ENCODE measurements at regions of chr6 and their contacts with region 1.

Region 1: GRCh38 chr6:123316733-123317323 is 319.9 kb downstream of the TRDN start:
- DNase-seq: no peak

Region 2: DNA sequence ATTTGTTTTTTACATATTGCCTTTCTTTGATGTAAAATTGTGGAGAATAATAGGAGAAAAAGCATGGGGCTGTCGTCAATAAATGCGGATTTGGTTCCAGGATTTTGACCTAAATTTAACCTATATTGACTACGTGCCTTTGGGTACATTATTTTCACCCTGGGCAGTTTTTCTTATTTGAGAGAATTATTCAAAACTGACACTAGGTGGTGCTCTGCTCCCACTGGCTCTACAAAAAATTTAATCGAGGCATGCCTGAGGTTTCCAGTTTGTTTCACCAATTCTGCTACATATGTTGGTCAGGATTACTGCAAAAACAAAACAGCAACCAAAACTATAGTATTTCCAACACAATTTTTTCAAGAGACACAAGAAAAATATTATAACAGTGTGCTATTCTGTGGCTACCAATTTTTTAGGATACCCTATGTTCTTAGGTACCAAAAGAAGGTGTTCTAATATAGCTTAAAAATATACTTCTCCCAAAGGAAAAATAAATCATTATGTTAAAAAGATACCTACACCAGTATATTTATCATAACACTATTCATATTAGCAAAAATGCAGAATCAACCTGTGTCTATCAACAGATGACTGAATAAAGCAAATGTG is 585.9 kb before region 1 on chr6:
- intact Hi-C with region 1: loop called (anchors 5 kb)
- DNase-seq: peak in 2 of 10 donors; percentile 23 to 34

Region 3: DNA sequence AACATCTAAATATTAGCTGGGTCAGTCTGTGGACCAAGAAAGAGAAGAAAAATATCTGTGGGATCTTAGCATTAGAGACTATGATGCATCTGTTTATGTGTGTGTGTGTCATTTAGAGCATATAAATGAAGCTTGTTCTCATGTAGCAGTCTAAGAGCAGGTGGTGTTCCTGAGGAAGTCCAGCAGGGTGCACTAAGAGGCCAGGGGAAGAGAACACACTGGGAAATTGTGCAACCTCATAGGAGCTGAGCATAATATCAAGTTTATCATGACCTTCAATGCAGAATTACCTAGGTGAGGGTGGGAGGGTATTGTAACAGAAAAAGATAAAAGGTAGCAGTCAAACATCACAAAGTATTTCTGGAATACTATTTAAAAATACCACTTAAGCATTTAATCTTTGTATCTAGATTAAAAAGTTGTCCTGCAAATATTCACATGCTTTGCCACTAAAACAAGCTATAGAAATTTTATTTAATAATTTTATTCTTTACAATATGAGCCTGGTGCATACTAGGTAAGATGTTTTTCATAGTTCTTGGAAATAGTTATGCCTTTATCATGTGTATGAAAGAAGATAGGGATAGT is 447.3 kb before region 1 on chr6:
- intact Hi-C with region 1: loop called (anchors 2 kb)
- DNase-seq: peak in 5 of 10 donors; percentile 20 to 88 (median 24)

Region 4: GRCh38 chr6:122930252-122931180 is 386.3 kb before region 1 on chr6:
- intact Hi-C with region 1: loop called (anchors 10 kb)
- DNase-seq: no peak

Region 5: DNA sequence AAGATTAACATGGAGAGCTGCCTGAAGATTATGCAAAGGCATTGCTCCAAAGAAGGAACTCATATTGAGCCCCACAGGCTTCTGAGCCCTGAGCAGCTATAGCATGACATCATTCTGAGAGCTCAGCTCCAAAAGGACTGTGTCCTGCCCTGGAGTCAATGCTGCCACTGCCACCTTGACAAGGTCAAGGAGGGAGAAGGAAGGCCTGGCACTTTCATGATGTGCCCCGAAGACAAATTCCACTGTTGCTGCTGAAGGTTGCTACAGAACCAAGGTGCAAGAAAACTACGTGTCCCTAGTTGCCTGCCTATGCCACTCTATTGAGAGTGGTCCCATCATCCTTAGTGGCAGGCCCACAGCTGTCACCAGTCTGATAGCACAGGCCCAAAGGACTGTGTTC is 74.0 kb before region 1 on chr6:
- intact Hi-C with region 1: no loop called
- DNase-seq: peak in 1 of 10 donors; percentile 36

Measured in posterior cingulate gyrus (tissue), 11 donors.